ENCODE measurements at regions of chr17 and their contacts with region 1.

Region 1: GRCh38 chr17:80605326-80606066 is 60.9 kb downstream of the RPTOR start:
- DNase-seq: peak; percentile 82
- H3K4me3 Mint-ChIP-seq: no peak overlapping the region
- H3K27ac Mint-ChIP-seq: peak overlapping the region; percentile 69
- H3K4me1 Mint-ChIP-seq: peaks cover 64% of the 10 kb centered on the region
- H3K27me3 Mint-ChIP-seq: no peaks in the 10 kb centered on the region

Region 2: GRCh38 chr17:80649678-80650672 is 44.5 kb after region 1 on chr17:
- CTCF ChIA-PET with region 1: no interaction called
- intact Hi-C with region 1: loop called (anchors 5 kb)
- DNase-seq: peak; percentile 91
- H3K4me3 Mint-ChIP-seq: peak overlapping the region; percentile 0
- H3K27ac Mint-ChIP-seq: peak overlapping the region; percentile 81
- H3K4me1 Mint-ChIP-seq: peaks cover 73% of the 10 kb centered on the region
- H3K27me3 Mint-ChIP-seq: no peaks in the 10 kb centered on the region